ENCODE measurements at regions of chr6 and their contacts with region 1.

Region 1: GRCh38 chr6:2999618-3000557 is at the start of gene NQO2:
- DNase-seq: peak; percentile 90
- H3K4me3 Mint-ChIP-seq: peak within 1 kb of the TSS; percentile 80
- H3K27ac Mint-ChIP-seq: peak within 1 kb of the TSS; percentile 37
- H3K4me1 Mint-ChIP-seq: peaks cover 12% of the 10 kb centered on the region
- H3K27me3 Mint-ChIP-seq: no peaks in the 10 kb centered on the region
- CTCF ChIP-seq: no peak
- total RNA-seq, gene NQO2: 18.6 and 20.0 TPM in 2 replicates

Region 2: GRCh38 chr6:3039384-3039783 is 39.5 kb after region 1 on chr6:
- CTCF ChIA-PET with region 1: interaction called, 6 read pairs
- POLR2A ChIA-PET with region 1: interaction called, 11 read pairs
- intact Hi-C with region 1: no loop called
- DNase-seq: no peak
- H3K4me3 Mint-ChIP-seq: no peak overlapping the region
- H3K27ac Mint-ChIP-seq: no peak overlapping the region
- H3K4me1 Mint-ChIP-seq: no peaks in the 10 kb centered on the region
- H3K27me3 Mint-ChIP-seq: no peaks in the 10 kb centered on the region
- CTCF ChIP-seq: no peak

Region 3: GRCh38 chr6:3068329-3069214 is 68.7 kb after region 1 on chr6 and contains the start of gene RIPK1:
- CTCF ChIA-PET with region 1: interaction called, 3 read pairs
- POLR2A ChIA-PET with region 1: interaction called, 13 read pairs
- intact Hi-C with region 1: no loop called
- DNase-seq: peak; percentile 88
- H3K4me3 Mint-ChIP-seq: peak within 1 kb of the TSS; percentile 93
- H3K27ac Mint-ChIP-seq: peak within 1 kb of the TSS; percentile 93
- H3K4me1 Mint-ChIP-seq: peaks cover 12% of the 10 kb centered on the region
- H3K27me3 Mint-ChIP-seq: no peaks in the 10 kb centered on the region
- CTCF ChIP-seq: no peak
- total RNA-seq, gene RIPK1: 16.8 and 21.2 TPM in 2 replicates

Region 4: DNA sequence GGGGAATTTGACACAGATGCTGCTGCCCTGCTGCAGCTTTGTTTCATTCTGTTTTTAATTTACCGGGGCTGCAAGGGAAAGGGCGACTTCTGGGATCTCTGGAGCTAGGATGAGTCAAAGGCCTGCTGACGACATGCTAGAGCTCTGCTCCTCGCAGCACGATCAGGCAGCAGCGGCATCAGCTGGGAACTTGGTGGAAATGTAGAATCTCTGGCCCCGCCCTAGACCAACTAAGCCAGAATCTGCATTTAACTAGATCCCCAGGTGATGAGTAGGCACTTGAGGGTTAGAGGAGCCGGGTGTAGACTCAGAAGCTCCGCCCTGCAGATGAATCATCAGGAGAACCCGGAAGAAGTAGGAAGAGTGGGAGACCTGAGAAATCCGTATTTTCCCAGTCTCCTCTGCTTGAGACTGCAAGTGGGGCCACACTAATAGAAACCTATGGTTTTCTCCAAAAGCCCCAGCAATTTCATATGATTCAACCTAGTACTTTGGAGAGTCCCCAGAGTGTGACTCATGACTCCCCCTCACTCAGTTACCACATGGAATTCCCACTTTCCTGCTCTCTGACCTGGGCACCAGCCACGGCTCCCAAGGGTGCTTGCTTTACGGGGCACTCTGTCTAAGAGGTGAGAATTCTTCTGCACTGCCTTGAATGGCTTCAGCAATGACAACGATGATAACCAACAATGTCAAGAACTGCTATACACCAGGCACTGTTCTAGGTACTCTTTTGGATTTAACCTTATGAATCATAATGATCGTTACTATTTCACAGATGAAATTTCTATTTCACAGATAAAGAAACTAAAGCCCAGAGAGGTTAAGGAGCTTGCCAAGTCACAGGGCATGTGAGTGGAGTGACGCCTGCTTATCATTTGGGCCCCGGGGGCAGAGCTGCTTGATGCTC is 209.5 kb after region 1 on chr6:
- CTCF ChIA-PET with region 1: no interaction called
- POLR2A ChIA-PET with region 1: interaction called, 3 read pairs
- intact Hi-C with region 1: loop called (anchors 5 kb)
- DNase-seq: peak; percentile 99
- H3K4me3 Mint-ChIP-seq: peak overlapping the region; percentile 61
- H3K27ac Mint-ChIP-seq: peak overlapping the region; percentile 94
- H3K4me1 Mint-ChIP-seq: peaks cover 26% of the 10 kb centered on the region
- H3K27me3 Mint-ChIP-seq: no peaks in the 10 kb centered on the region
- CTCF ChIP-seq: no peak

Region 5: GRCh38 chr6:3393836-3394202 is 393.9 kb after region 1 on chr6:
- CTCF ChIA-PET with region 1: no interaction called
- POLR2A ChIA-PET with region 1: no interaction called
- intact Hi-C with region 1: no loop called
- DNase-seq: no peak
- H3K4me3 Mint-ChIP-seq: no peak overlapping the region
- H3K27ac Mint-ChIP-seq: no peak overlapping the region
- H3K4me1 Mint-ChIP-seq: no peaks in the 10 kb centered on the region
- H3K27me3 Mint-ChIP-seq: no peaks in the 10 kb centered on the region
- CTCF ChIP-seq: no peak

Measured in MCF 10A (cell line).